Testis (tissue), 5 donors: ENCODE measurements at regions of chr16 and their contacts with region 1.

Region 1: GRCh38 chr16:84617791-84618580 is at the start of gene COTL1:
- DNase-seq: peak; percentile 97
- H3K4me3 ChIP-seq: peak within 1 kb of the TSS; percentile 63 to 74
- H3K27ac ChIP-seq: peak within 1 kb of the TSS in 1 of 2 donors; percentile 70
- H3K4me1 ChIP-seq: peaks cover 25% of the 10 kb centered on the region
- H3K27me3 ChIP-seq: no peaks in the 10 kb centered on the region
- CTCF ChIP-seq: no peak
- POLR2A ChIP-seq: no peak
- total RNA-seq, gene COTL1: 61.9 to 124 TPM

Region 2: GRCh38 chr16:84511180-84511824 is 106.7 kb before region 1 on chr16:
- intact Hi-C with region 1: loop called (anchors 5 kb)
- DNase-seq: peak; percentile 89
- H3K4me3 ChIP-seq: no peak overlapping the region
- H3K27ac ChIP-seq: no peak overlapping the region
- H3K4me1 ChIP-seq: no peaks in the 10 kb centered on the region
- H3K27me3 ChIP-seq: no peaks in the 10 kb centered on the region
- CTCF ChIP-seq: peak; percentile 97 to 99 (median 99)
- POLR2A ChIP-seq: no peak

Region 3: DNA sequence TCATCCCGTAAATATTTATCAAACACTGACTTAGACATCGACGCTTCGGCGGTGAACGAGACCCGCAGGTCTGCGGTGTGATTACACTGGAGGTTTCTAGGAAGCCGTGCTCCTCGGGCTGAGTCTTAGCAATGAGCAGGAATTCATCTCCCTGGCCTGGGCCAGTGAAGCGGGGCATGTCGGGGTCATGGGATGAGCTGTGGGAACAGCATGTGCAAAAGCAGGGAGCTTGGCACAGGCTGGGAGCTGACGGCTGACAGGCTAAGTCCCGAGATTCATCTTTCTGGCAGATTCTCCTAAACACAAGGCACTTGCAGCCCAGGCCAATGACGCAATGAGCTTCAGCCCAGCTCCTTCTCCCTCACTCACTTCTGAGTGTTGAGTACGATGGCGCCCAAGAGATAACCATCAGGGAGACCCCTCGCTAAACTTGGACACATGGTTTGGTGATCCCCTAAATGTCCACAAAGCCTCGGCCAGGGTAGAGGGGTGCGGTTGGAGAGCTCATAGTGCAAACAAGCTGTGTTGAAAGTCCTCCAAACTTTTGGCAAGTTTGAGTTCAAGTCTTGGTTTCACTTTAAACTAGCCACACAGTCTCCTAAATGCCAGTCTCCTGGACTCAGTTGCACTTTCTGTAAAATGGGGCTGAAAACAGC is 214.6 kb after region 1 on chr16:
- intact Hi-C with region 1: no loop called
- DNase-seq: peak; percentile 88
- H3K4me3 ChIP-seq: no peak overlapping the region
- H3K27ac ChIP-seq: peak overlapping the region; percentile 78 to 92
- H3K4me1 ChIP-seq: peaks cover 54% of the 10 kb centered on the region
- H3K27me3 ChIP-seq: no peaks in the 10 kb centered on the region
- CTCF ChIP-seq: no peak
- POLR2A ChIP-seq: peak; percentile 30